ENCODE measurements at regions of chr4 and their contacts with region 1.

Region 1: DNA sequence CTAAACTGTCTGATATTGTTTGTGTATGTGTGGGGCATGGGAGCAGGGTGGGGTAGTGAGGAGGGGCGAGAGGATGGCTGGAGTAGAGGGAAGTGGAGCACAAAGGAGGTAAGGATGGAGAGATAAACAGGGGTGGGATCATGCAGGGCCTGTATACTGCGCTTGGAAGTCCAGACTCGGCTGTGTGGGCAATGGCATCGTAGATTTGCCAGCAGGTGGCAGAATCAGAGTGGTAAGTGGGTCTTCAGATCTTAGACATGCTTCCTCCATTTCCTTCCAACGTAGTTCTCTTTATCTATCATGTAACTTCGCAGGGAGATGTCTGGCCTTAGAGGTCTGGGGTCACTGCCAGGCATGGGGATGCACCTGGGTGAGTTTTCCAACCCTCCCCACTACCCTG is 155.5 kb downstream of the PDGFRA start:
- DNase-seq: peak; percentile 29
- H3K4me3 ChIP-seq: no peak overlapping the region
- H3K27ac ChIP-seq: no peak overlapping the region
- H3K4me1 ChIP-seq: no peaks in the 10 kb centered on the region
- H3K27me3 ChIP-seq: no peaks in the 10 kb centered on the region
- CTCF ChIP-seq: peak; percentile 51

Region 2: DNA sequence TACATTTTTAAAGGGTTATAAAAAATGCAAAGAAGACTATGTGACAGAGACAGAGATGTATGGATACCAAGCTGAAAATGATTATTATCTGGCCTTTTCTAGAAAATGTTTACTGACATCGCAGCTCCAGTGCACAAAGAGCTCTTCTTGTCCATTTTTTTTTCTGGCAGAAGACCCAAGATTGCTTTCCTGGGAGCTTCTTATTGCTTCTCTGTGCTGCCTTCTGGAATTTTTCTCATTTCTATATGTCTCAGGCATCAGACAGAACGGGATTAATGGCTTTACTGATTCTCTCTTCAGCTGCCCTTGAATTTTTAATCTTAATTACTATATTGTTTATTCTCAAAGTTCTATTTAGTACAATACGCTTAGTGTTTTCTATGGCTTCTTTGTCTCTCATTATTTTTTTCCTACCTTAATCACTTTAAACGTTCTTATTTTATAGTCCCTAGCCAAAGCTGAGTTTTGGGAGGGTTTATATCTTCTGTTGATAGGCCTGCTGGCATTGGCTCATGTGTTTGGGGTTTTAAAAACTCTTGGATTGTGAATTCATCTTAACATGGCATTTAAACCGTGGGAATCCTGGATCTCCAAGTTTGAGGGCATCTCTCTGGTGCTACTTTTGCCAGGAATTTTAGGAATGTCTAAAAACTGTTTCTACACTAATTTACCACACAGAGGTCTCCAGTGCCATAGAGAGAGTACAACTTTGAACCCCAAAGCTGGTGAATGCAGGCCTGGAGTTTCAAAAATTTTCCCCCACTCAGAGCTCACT is 654.3 kb before region 1 on chr4:
- CTCF ChIA-PET with region 1: no interaction called
- POLR2A ChIA-PET with region 1: interaction called, 12 read pairs
- intact Hi-C with region 1: no loop called
- DNase-seq: no peak
- H3K4me3 ChIP-seq: no peak overlapping the region
- H3K27ac ChIP-seq: no peak overlapping the region
- H3K4me1 ChIP-seq: no peaks in the 10 kb centered on the region
- H3K27me3 ChIP-seq: no peaks in the 10 kb centered on the region
- CTCF ChIP-seq: no peak

Region 3: GRCh38 chr4:54127660-54128059 is 256.9 kb before region 1 on chr4:
- CTCF ChIA-PET with region 1: no interaction called
- POLR2A ChIA-PET with region 1: no interaction called
- intact Hi-C with region 1: no loop called
- DNase-seq: no peak
- H3K4me3 ChIP-seq: no peak overlapping the region
- H3K27ac ChIP-seq: no peak overlapping the region
- H3K4me1 ChIP-seq: no peaks in the 10 kb centered on the region
- H3K27me3 ChIP-seq: no peaks in the 10 kb centered on the region
- CTCF ChIP-seq: no peak

Region 4: GRCh38 chr4:54645830-54646229 is 261.3 kb after region 1 on chr4:
- CTCF ChIA-PET with region 1: no interaction called
- POLR2A ChIA-PET with region 1: no interaction called
- intact Hi-C with region 1: no loop called
- DNase-seq: no peak
- H3K4me3 ChIP-seq: no peak overlapping the region
- H3K27ac ChIP-seq: no peak overlapping the region
- H3K4me1 ChIP-seq: no peaks in the 10 kb centered on the region
- H3K27me3 ChIP-seq: no peaks in the 10 kb centered on the region
- CTCF ChIP-seq: no peak

Region 5: GRCh38 chr4:54961357-54961975 is 576.9 kb after region 1 on chr4:
- CTCF ChIA-PET with region 1: no interaction called
- POLR2A ChIA-PET with region 1: no interaction called
- intact Hi-C with region 1: loop called (anchors 10 kb)
- DNase-seq: peak; percentile 30
- H3K4me3 ChIP-seq: no peak overlapping the region
- H3K27ac ChIP-seq: no peak overlapping the region
- H3K4me1 ChIP-seq: no peaks in the 10 kb centered on the region
- H3K27me3 ChIP-seq: no peaks in the 10 kb centered on the region
- CTCF ChIP-seq: peak; percentile 61